Breast epithelium (tissue), 4 donors: ENCODE measurements at regions of chr22 and their contacts with region 1.

Region 1: GRCh38 chr22:38755911-38756532 is at the start of gene SUN2:
- DNase-seq: peak; percentile 93 to 95
- H3K4me3 ChIP-seq: peak within 1 kb of the TSS; percentile 56 to 99 (median 75)
- H3K27ac ChIP-seq: peak within 1 kb of the TSS; percentile 96 to 100
- H3K4me1 ChIP-seq: peaks cover 4 to 20% of the 10 kb centered on the region in 2 donors
- H3K27me3 ChIP-seq: no peaks in the 10 kb centered on the region
- CTCF ChIP-seq: no peak
- POLR2A ChIP-seq: peak; percentile 17
- total RNA-seq, gene SUN2: 173 to 577 (median 266) TPM

Region 2: DNA sequence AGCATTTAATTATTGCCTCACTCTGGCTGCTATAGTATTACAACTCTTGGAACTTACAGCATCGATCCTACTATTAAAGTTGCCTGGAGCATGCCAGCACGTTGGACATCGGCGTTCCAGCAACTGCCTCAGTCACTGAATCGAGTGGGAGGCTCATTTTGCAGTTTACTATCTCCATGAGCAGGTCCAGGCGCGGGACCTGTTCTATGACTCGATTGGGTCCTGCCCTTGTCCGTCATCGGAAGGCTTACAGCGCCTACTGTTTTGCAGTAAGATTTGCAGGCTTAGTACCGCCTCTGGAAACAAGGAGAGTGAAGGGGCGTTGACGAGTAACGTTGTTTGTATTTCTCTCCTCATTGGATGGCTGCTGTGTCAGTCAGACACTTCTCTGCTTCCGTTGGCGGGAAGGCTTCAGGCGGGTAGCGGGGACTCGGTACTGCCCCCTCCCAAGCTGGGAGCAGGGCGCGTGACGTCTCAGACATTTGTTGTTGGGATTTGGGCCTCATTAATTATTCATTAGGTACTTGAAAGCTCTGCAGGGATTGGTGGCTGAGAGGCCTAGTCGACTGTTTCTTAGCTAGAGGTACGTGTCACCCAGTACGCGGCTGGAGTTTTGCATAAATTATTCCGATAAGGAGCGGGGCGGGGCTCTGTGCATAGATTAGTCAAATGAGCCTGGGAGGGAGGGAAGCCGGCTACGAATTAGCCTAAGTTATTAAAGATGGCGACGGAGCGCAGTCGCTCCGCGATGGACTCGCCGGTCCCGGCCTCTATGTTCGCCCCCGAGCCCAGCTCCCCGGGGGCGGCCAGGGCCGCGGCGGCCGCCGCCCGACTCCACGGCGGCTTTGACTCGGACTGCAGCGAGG is 50.6 kb before region 1 on chr22 and contains the start of gene GTPBP1:
- intact Hi-C with region 1: loop called (anchors 10 kb)
- DNase-seq: peak; percentile 97 to 100
- H3K4me3 ChIP-seq: peak within 1 kb of the TSS; percentile 83 to 90 (median 89)
- H3K27ac ChIP-seq: peak within 1 kb of the TSS; percentile 96 to 99
- H3K4me1 ChIP-seq: peaks cover 4 to 17% of the 10 kb centered on the region in 2 donors
- H3K27me3 ChIP-seq: no peaks in the 10 kb centered on the region
- CTCF ChIP-seq: peak in 2 of 3 donors; percentile 20 to 36
- POLR2A ChIP-seq: peak; percentile 82
- total RNA-seq, gene GTPBP1: 32.3 to 58.7 (median 56.9) TPM

Region 3: DNA sequence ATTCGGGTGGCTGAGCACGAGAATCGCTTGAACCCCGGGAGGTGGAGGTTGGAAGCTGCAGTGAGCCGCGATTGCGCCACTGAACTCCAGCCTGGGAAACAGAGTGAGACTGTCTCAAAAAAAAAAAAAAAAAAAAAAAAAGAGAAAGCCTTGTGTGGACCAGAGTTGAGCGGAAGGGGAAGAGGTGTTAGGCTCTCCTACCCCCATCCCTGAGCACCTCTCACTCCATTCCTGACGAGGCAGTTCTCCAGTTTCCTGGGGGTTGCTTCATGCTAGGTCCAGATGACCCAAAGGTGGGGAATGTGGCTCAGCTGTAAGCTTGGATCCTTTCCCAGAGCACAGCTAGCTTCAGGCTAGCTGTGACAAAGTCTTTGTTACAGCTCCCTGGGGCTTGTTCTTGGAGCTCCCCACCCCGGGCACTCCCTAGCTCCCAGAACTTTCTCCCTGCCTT is 46.7 kb after region 1 on chr22:
- intact Hi-C with region 1: loop called (anchors 1 kb)
- DNase-seq: peak; percentile 64 to 76
- H3K4me3 ChIP-seq: no peak overlapping the region
- H3K27ac ChIP-seq: peak overlapping the region in 1 of 2 donors; percentile 43
- H3K4me1 ChIP-seq: no peaks in the 10 kb centered on the region
- H3K27me3 ChIP-seq: no peaks in the 10 kb centered on the region
- CTCF ChIP-seq: no peak
- POLR2A ChIP-seq: no peak